ENCODE measurements at regions of chr13 and their contacts with region 1.

Region 1: DNA sequence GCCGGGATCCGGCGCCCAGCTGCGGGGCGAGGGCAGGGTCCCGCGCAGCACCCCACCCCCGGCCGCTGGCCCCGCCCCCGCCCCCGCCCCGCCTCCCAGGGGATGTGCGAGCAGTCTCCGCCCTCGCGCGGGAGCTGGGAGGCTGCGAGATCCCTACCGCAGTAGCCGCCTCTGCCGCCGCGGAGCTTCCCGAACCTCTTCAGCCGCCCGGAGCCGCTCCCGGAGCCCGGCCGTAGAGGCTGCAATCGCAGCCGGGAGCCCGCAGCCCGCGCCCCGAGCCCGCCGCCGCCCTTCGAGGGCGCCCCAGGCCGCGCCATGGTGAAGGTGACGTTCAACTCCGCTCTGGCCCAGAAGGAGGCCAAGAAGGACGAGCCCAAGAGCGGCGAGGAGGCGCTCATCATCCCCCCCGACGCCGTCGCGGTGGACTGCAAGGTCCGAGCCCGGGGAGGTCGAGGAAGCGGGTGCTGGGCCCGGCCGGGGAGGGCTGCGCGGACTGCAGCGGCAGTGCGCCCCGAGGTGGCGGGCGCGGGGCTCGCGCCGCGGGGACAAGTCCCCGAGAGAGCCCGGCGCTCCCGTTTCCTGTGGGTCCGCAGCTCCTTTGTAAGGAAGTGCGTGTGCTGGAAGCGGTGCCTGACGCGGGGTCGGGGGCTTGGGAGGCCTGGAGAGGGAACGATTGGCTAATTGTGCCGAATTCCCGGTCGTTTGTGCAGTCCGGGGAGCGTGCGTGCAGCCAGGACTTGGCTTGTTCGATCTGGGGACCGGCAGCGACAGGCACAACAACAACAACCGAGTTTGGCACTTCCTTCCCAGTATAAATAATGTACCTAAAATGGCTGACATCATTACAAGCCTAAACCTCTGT is at the start of gene ITM2B:
- DNase-seq: no peak
- H3K4me3 ChIP-seq: peak within 1 kb of the TSS; percentile 76 to 95 (median 92)
- H3K27ac ChIP-seq: peak within 1 kb of the TSS; percentile 92 to 100 (median 97)
- H3K4me1 ChIP-seq: peaks cover 30 to 44% (median 40%) of the 10 kb centered on the region in 4 donors
- H3K27me3 ChIP-seq: no peaks in the 10 kb centered on the region
- CTCF ChIP-seq: peak; percentile 33 to 63 (median 38)
- EP300 ChIP-seq: no peak
- POLR2A ChIP-seq: peak; percentile 62
- total RNA-seq, gene ITM2B: 299 to 343 (median 303) TPM

Region 2: GRCh38 chr13:48037346-48038173 is 195.7 kb before region 1 on chr13 and contains the start of gene NUDT15:
- intact Hi-C with region 1: loop called (anchors 10 kb)
- DNase-seq: peak; percentile 98
- H3K4me3 ChIP-seq: peak within 1 kb of the TSS; percentile 74 to 90 (median 78)
- H3K27ac ChIP-seq: peak within 1 kb of the TSS; percentile 94 to 97 (median 96)
- H3K4me1 ChIP-seq: peaks cover 8 to 20% (median 18%) of the 10 kb centered on the region in 4 donors
- H3K27me3 ChIP-seq: no peaks in the 10 kb centered on the region
- CTCF ChIP-seq: peak; percentile 90 to 97 (median 93)
- EP300 ChIP-seq: peak; percentile 89
- POLR2A ChIP-seq: peak; percentile 67
- total RNA-seq, gene NUDT15: 5.0 to 8.0 (median 5.9) TPM

Region 3: GRCh38 chr13:48094781-48095502 is 138.3 kb before region 1 on chr13 and contains the start of gene MED4:
- intact Hi-C with region 1: loop called (anchors 10 kb)
- DNase-seq: peak; percentile 98
- H3K4me3 ChIP-seq: peak within 1 kb of the TSS; percentile 93 to 98 (median 96)
- H3K27ac ChIP-seq: peak within 1 kb of the TSS; percentile 84 to 91 (median 89)
- H3K4me1 ChIP-seq: peaks cover 16 to 48% (median 43%) of the 10 kb centered on the region in 4 donors
- H3K27me3 ChIP-seq: no peaks in the 10 kb centered on the region
- CTCF ChIP-seq: peak; percentile 98 to 99 (median 99)
- EP300 ChIP-seq: no peak
- POLR2A ChIP-seq: peak; percentile 72
- total RNA-seq, gene MED4: 32.0 to 42.1 (median 37.1) TPM

Region 4: GRCh38 chr13:48126944-48127830 is 106.1 kb before region 1 on chr13:
- intact Hi-C with region 1: loop called (anchors 1 kb)
- DNase-seq: no peak
- H3K4me3 ChIP-seq: no peak overlapping the region
- H3K27ac ChIP-seq: peak overlapping the region; percentile 75 to 85 (median 80)
- H3K4me1 ChIP-seq: peaks cover 35 to 54% (median 54%) of the 10 kb centered on the region in 4 donors
- H3K27me3 ChIP-seq: no peaks in the 10 kb centered on the region
- CTCF ChIP-seq: peak; percentile 67 to 82 (median 74)
- EP300 ChIP-seq: no peak
- POLR2A ChIP-seq: no peak

Region 5: DNA sequence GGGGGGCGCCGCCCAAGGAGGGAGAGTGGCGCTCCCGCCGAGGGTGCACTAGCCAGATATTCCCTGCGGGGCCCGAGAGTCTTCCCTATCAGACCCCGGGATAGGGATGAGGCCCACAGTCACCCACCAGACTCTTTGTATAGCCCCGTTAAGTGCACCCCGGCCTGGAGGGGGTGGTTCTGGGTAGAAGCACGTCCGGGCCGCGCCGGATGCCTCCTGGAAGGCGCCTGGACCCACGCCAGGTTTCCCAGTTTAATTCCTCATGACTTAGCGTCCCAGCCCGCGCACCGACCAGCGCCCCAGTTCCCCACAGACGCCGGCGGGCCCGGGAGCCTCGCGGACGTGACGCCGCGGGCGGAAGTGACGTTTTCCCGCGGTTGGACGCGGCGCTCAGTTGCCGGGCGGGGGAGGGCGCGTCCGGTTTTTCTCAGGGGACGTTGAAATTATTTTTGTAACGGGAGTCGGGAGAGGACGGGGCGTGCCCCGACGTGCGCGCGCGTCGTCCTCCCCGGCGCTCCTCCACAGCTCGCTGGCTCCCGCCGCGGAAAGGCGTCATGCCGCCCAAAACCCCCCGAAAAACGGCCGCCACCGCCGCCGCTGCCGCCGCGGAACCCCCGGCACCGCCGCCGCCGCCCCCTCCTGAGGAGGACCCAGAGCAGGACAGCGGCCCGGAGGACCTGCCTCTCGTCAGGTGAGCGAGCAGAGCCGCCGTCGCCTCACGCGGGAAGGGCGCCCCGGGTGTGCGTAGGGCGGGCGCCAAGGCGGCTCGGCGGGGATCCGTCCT is 70.3 kb after region 1 on chr13 and contains the start of gene RB1:
- intact Hi-C with region 1: loop called (anchors 5 kb)
- DNase-seq: peak; percentile 95
- H3K4me3 ChIP-seq: peak within 1 kb of the TSS; percentile 78 to 96 (median 94)
- H3K27ac ChIP-seq: peak within 1 kb of the TSS; percentile 99 to 100 (median 99)
- H3K4me1 ChIP-seq: peaks cover 23 to 35% (median 32%) of the 10 kb centered on the region in 4 donors
- H3K27me3 ChIP-seq: no peaks in the 10 kb centered on the region
- CTCF ChIP-seq: no peak
- EP300 ChIP-seq: no peak
- POLR2A ChIP-seq: peak; percentile 96
- total RNA-seq, gene RB1: 28.4 to 33.2 (median 29.9) TPM

Region 6: GRCh38 chr13:48580185-48580803 is 347.0 kb after region 1 on chr13:
- intact Hi-C with region 1: loop called (anchors 10 kb)
- DNase-seq: peak; percentile 93
- H3K4me3 ChIP-seq: no peak overlapping the region
- H3K27ac ChIP-seq: no peak overlapping the region
- H3K4me1 ChIP-seq: peaks cover 17 to 31% (median 23%) of the 10 kb centered on the region in 4 donors
- H3K27me3 ChIP-seq: no peaks in the 10 kb centered on the region
- CTCF ChIP-seq: peak; percentile 78 to 84 (median 80)
- EP300 ChIP-seq: no peak
- POLR2A ChIP-seq: no peak

Measured in esophagus muscularis mucosa (tissue), 4 donors.